Heart left ventricle (tissue), 16 donors: ENCODE measurements at regions of chr11 and their contacts with region 1.

Region 1: DNA sequence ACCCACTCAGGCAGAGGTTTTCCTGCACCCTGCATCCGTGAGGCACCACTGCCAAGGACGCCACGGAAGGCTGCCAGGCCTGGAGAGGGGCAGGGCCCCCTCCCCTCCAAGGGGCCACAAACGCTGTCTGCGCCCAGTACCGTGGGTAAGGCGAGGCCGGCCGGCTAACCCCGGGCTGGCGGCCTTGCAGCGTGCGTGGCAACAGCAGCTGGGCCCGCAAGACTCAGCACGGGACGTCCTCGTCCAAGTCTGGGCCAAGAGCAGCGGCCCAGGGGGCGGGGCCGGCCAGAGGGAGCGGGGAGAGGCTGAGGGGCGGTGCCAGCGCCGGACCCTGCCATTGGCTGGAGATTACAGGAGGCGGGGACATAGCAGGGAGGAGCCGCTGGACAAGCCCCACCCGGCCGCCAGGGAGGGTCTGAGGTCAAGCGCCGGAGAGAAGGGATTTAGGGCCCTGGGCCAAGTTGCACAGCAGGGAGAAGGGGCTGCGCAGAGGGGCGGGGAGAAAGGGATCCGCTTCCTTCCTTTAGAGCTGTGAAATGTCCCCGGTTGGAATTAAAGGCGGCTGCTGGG is 16.0 kb downstream of the SLC43A1 start:
- DNase-seq: peak; percentile 98 to 99 (median 98)
- ATAC-seq: peak; percentile 99 to 100 (median 99)
- H3K4me3 ChIP-seq: peak overlapping the region in 10 of 12 donors; percentile 27 to 50 (median 42)
- H3K27ac ChIP-seq: peak overlapping the region; percentile 53 to 89 (median 81)
- H3K4me1 ChIP-seq: peaks cover 5 to 35% (median 20%) of the 10 kb centered on the region in 12 donors
- H3K27me3 ChIP-seq: no peaks in the 10 kb centered on the region
- CTCF ChIP-seq: no peak
- POLR2A ChIP-seq: peak in 1 of 2 donors; percentile 54

Region 2: DNA sequence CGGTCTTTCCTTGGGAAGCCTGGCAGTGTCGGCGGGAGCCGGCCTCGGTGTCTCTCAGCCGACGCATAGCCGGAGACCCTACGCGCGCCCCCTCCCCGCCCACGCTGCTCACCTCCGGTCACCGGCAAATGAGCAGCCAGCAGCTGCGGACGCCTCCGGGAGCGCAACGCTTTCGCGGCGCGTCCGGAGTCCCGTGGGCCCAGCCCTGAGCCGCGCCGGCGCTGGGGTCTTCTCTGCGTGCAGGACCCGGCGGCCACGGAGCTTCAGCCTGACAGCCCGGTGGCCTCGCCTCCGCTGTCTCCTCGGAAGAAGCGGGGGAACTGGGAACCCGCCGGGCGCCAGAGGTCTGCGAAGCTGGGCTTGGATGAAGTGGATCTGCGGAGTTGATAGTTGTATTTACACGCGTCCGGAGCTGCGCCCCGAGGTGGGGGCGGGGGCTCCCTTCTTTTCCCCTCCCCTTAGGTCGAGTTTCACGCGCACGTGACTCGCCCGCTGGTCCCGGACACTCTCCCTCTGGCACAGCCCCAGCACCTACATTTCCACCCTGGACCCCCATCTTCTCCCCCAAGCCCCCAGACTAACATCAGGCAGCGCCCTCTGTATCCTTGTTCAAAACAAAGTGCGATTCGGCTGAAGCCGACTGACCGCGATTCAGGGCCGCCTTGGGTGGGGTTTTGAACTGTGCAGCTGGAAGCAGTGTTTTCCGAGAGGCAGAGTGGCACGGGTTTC is 16.0 kb after region 1 on chr11 and contains the start of gene SLC43A1:
- intact Hi-C with region 1: loop called in 2 of 10 experiments (anchors 2 kb)
- DNase-seq: peak; percentile 43 to 77 (median 63)
- ATAC-seq: peak; percentile 67 to 78 (median 75)
- H3K4me3 ChIP-seq: peak within 1 kb of the TSS; percentile 62 to 98 (median 80)
- H3K27ac ChIP-seq: peak within 1 kb of the TSS in 11 of 12 donors; percentile 23 to 77 (median 60)
- H3K4me1 ChIP-seq: peaks cover 0 to 26% (median 12%) of the 10 kb centered on the region in 12 donors
- H3K27me3 ChIP-seq: no peaks in the 10 kb centered on the region
- CTCF ChIP-seq: peak in 2 of 12 donors; percentile 13 to 15
- POLR2A ChIP-seq: peak in 1 of 2 donors; percentile 36
- total RNA-seq, gene SLC43A1: 2.7 to 12.3 (median 5.4) TPM

Region 3: GRCh38 chr11:57644748-57645688 is 145.5 kb after region 1 on chr11:
- intact Hi-C with region 1: loop called in 1 of 10 experiments (anchors 10 kb)
- DNase-seq: peak; percentile 74 to 83 (median 82)
- ATAC-seq: peak in 3 of 4 donors; percentile 74 to 80 (median 80)
- H3K4me3 ChIP-seq: peak overlapping the region in 3 of 12 donors; percentile 2 to 21 (median 19)
- H3K27ac ChIP-seq: peak overlapping the region in 10 of 12 donors; percentile 10 to 69 (median 56)
- H3K4me1 ChIP-seq: peaks cover 2 to 75% (median 46%) of the 10 kb centered on the region in 12 donors
- H3K27me3 ChIP-seq: peaks cover 4 to 43% (median 34%) of the 10 kb centered on the region in 9 donors
- CTCF ChIP-seq: peak; percentile 77 to 91 (median 86)
- POLR2A ChIP-seq: no peak

Region 4: DNA sequence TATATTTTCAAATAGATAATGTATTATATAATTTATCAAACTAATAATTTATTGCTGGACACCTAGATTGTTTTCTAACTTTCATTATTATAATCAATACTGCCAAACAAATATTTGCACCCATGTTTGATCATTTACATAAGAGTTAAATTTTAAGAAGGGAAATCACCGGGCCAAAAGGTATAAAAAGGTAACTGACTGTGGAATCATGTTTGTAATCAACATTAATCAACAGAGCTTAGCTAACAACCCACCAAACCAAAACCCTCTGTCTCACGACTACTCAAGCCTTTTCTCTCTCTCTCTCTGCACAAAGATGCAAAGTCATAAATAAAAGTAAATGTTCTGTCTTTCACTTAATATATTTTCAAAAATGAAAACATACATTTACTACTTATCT is 1061.3 kb after region 1 on chr11:
- intact Hi-C with region 1: no loop called
- DNase-seq: no peak
- ATAC-seq: no peak
- H3K4me3 ChIP-seq: no peak overlapping the region
- H3K27ac ChIP-seq: no peak overlapping the region
- H3K4me1 ChIP-seq: peaks cover 0 to 6% (median 0%) of the 10 kb centered on the region in 12 donors
- H3K27me3 ChIP-seq: no peaks in the 10 kb centered on the region
- CTCF ChIP-seq: no peak
- POLR2A ChIP-seq: no peak